ENCODE measurements at regions of chr1 and their contacts with region 1.

Region 1: GRCh38 chr1:205919026-205919746 is 24.1 kb downstream of the SLC26A9 start:
- DNase-seq: peak; percentile 46 to 97 (median 90)

Region 2: GRCh38 chr1:205791568-205792180 is 127.5 kb before region 1 on chr1:
- intact Hi-C with region 1: loop called (anchors 10 kb)
- DNase-seq: peak; percentile 44 to 90 (median 80)

Region 3: DNA sequence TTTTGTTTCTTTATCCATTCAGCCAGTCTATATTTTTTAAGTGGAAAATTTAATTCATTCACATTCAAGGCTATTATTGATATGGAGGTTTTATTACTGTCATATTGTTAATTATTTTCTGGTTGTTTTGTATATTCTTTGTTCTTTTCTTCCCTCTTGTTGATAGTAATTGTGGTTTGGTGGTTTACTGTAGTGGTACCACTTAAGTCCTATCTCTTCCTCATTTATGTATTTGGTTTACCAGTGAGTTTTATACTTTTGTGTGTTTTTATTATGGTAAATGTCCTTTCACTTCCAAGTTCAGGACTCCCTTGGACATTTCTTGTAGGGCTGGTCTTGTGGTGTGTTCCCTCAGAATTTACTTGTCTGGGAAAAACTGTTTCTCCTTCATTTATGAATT is 41.2 kb before region 1 on chr1:
- intact Hi-C with region 1: no loop called
- DNase-seq: no peak

Region 4: DNA sequence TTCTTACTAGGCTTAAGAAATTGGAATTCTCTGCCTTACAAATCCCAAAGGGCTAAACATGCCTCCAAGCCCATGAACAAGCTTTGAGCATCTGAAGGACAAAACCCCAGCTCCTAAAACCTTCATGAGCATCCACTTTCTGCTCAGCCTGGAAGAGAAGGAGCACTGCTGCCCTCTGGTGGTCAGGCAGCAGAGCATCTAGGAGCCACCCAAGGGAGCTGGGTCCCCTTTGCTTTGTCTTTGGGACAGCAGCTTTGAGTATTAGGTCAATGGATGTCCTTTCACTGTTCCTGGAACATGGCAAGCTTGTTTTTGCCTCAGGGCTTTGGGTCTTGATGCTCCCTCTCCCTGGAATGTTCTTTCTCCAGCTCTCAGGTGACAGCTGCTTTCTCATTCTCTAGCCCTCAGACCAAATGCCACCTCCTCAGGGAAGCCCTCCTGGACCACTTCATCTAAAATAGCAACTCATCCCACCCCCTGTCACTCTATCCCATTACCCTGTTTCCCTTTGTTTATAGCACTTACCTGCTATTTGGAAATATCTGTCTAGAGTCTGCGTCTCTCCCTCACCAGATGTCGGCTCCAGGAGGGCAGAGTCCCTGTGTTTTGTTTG is 58.3 kb after region 1 on chr1:
- intact Hi-C with region 1: loop called (anchors 1 kb)
- DNase-seq: peak; percentile 47 to 91 (median 84)

Measured in head of caudate nucleus (tissue), 42 donors.